Adrenal gland (tissue), 19 donors: ENCODE measurements at regions of chr1 and their contacts with region 1.

Region 1: DNA sequence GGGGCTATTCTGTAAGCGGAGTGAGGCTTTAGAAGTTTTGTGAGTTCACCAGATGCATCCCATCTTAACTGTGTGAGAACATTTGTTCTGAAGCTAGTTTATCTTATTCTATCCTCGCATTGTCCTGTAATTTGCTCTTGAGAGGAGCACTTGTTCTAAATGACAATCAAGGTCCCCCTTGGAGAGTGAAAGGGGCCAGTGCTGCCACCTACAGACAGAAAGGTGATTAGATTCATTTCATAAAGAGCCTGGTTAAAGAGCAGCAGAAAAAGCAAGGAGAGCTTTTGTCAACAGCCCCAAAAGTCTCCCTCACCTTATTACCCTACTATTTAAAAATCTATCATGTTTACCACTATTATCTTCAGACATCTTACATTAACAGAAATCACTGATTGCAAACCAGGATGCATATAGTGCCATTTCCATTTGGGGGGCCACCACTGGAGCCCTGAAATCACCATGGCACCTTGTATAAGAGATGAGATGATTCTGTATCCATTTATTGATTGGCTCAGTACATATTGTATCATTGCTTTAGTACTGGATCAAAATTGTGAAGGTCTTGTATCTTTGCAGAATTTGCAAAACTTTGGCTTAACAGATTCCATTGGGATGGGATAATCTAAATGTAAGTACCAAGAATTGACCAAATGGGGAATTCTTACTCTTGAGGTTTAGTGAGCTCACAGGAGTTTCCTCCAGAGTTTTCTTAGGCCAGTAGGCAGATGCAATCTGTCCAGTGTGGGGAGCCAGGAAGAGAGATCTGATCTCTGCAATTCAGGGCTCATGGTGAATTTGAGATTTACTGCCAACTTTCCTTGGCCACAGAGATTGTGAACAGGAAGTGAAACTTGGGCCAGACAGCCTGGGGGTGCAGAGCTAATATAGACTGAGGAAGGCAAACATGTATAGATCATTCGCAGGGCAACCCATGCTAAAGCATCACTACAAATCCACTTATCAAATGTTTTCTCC is 64.3 kb upstream of the TRABD2B start:
- DNase-seq: peak; percentile 35 to 81 (median 56)
- H3K4me3 ChIP-seq: no peak overlapping the region
- H3K27ac ChIP-seq: no peak overlapping the region
- H3K4me1 ChIP-seq: no peaks in the 10 kb centered on the region
- H3K27me3 ChIP-seq: no peaks in the 10 kb centered on the region
- CTCF ChIP-seq: peak; percentile 46 to 73 (median 61)
- POLR2A ChIP-seq: no peak

Region 2: GRCh38 chr1:47738560-47739182 is 322.8 kb before region 1 on chr1:
- intact Hi-C with region 1: loop called in 1 of 2 experiments (anchors 5 kb)
- DNase-seq: peak; percentile 47 to 70 (median 58)
- H3K4me3 ChIP-seq: no peak overlapping the region
- H3K27ac ChIP-seq: no peak overlapping the region
- H3K4me1 ChIP-seq: no peaks in the 10 kb centered on the region
- H3K27me3 ChIP-seq: peaks cover 11% of the 10 kb centered on the region
- CTCF ChIP-seq: peak; percentile 59 to 84 (median 72)
- POLR2A ChIP-seq: no peak

Region 3: GRCh38 chr1:47997289-47998200 is 63.9 kb before region 1 on chr1 and contains the start of gene TRABD2B:
- intact Hi-C with region 1: loop called (anchors 5 to 10 kb)
- DNase-seq: peak; percentile 71 to 82 (median 76)
- H3K4me3 ChIP-seq: peak within 1 kb of the TSS in 2 of 4 donors; percentile 13 to 71
- H3K27ac ChIP-seq: peak within 1 kb of the TSS in 1 of 5 donors; percentile 77
- H3K4me1 ChIP-seq: peaks cover 0 to 3% of the 10 kb centered on the region in 2 donors
- H3K27me3 ChIP-seq: peaks cover 9% of the 10 kb centered on the region
- CTCF ChIP-seq: peak; percentile 70 to 93 (median 90)
- POLR2A ChIP-seq: no peak
- total RNA-seq, gene TRABD2B: 0.33 to 3.3 (median 0.85) TPM